Calu3 (cell line): ENCODE measurements at regions of chr4 and their contacts with region 1.

Region 1: GRCh38 chr4:156378033-156378665 is 424.5 kb upstream of the CTSO start:
- DNase-seq: peak; percentile 44
- H3K4me3 Mint-ChIP-seq: no peak overlapping the region
- H3K27ac Mint-ChIP-seq: no peak overlapping the region
- H3K4me1 Mint-ChIP-seq: no peaks in the 10 kb centered on the region
- H3K27me3 Mint-ChIP-seq: no peaks in the 10 kb centered on the region
- CTCF ChIP-seq: peak; percentile 27

Region 2: GRCh38 chr4:156060661-156061060 is 317.5 kb before region 1 on chr4:
- CTCF ChIA-PET with region 1: no interaction called
- intact Hi-C with region 1: no loop called
- DNase-seq: no peak
- H3K4me3 Mint-ChIP-seq: no peak overlapping the region
- H3K27ac Mint-ChIP-seq: no peak overlapping the region
- H3K4me1 Mint-ChIP-seq: no peaks in the 10 kb centered on the region
- H3K27me3 Mint-ChIP-seq: no peaks in the 10 kb centered on the region
- CTCF ChIP-seq: no peak

Region 3: DNA sequence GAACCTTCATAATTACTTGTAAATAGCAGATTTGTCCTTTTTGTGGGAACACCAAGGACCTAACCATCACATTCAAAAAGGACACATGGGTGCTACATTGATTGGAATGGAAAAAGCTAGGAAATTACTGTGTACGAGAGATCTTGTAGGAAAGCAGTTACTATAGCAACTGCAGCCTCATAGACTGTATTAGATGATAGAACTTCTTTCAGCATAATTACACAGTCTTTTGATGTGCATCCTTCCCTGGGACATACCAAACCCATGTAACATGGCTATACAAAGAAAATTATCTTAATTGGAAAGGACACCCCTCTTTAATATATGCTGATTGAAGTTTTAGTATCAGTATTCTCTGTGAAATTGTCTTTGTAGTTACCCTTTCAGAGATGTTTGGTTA is 293.8 kb before region 1 on chr4:
- CTCF ChIA-PET with region 1: no interaction called
- intact Hi-C with region 1: no loop called
- DNase-seq: no peak
- H3K4me3 Mint-ChIP-seq: no peak overlapping the region
- H3K27ac Mint-ChIP-seq: no peak overlapping the region
- H3K4me1 Mint-ChIP-seq: no peaks in the 10 kb centered on the region
- H3K27me3 Mint-ChIP-seq: no peaks in the 10 kb centered on the region
- CTCF ChIP-seq: no peak

Region 4: DNA sequence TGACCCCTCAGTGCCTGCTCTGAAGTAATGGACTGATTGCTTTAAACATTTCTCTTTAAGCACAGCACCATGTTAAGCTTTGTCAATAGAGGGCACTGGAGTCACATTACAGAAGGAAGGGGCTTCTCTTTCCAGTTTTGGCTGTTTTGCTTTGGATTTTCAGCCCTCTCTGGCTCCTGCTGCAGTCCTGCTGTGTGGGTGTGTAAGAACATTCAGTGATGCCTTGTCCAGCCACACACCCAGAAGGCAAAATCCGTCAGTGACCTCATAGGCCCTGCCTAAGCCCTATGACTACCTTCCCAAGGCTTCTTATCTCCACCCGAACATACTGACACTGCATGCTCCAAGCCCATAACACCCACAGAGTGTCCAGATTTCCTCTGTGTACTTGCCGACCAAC is 209.1 kb before region 1 on chr4:
- CTCF ChIA-PET with region 1: interaction called, 4 read pairs
- intact Hi-C with region 1: loop called (anchors 2 kb)
- DNase-seq: peak; percentile 14
- H3K4me3 Mint-ChIP-seq: no peak overlapping the region
- H3K27ac Mint-ChIP-seq: no peak overlapping the region
- H3K4me1 Mint-ChIP-seq: peaks cover 13% of the 10 kb centered on the region
- H3K27me3 Mint-ChIP-seq: no peaks in the 10 kb centered on the region
- CTCF ChIP-seq: no peak

Region 5: DNA sequence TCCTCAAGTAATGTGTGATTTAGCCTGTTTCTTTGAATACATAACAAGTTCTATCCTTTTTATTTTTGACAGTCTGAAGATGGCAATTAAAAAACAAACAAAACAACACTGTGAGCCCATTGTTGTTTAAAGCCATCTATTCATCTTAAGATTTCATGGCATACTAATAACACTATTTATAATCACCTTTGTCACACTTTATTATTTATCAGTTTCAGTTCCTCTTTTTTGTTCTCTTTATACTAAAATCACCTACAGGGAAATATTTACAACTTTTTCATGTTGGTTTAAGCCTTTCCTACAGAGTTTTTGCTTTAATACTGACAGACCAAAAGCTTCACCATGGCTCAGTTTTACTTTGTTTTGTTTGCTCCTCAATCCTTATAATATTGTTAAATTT is 177.1 kb before region 1 on chr4:
- CTCF ChIA-PET with region 1: no interaction called
- intact Hi-C with region 1: no loop called
- DNase-seq: no peak
- H3K4me3 Mint-ChIP-seq: no peak overlapping the region
- H3K27ac Mint-ChIP-seq: no peak overlapping the region
- H3K4me1 Mint-ChIP-seq: no peaks in the 10 kb centered on the region
- H3K27me3 Mint-ChIP-seq: no peaks in the 10 kb centered on the region
- CTCF ChIP-seq: no peak

Region 6: GRCh38 chr4:156294577-156294976 is 83.6 kb before region 1 on chr4:
- CTCF ChIA-PET with region 1: interaction called, 4 read pairs
- intact Hi-C with region 1: loop called (anchors 1 kb)
- DNase-seq: peak; percentile 43
- H3K4me3 Mint-ChIP-seq: no peak overlapping the region
- H3K27ac Mint-ChIP-seq: peak overlapping the region; percentile 75
- H3K4me1 Mint-ChIP-seq: peaks cover 24% of the 10 kb centered on the region
- H3K27me3 Mint-ChIP-seq: no peaks in the 10 kb centered on the region
- CTCF ChIP-seq: no peak